ENCODE measurements at regions of chr14 and their contacts with region 1.

Region 1: GRCh38 chr14:61694830-61695694 is at the start of gene HIF1A:
- DNase-seq: peak; percentile 87
- H3K4me3 ChIP-seq: peak within 1 kb of the TSS; percentile 76 to 97 (median 92)
- H3K27ac ChIP-seq: peak within 1 kb of the TSS; percentile 96 to 100 (median 100)
- H3K4me1 ChIP-seq: peaks cover 9 to 39% (median 16%) of the 10 kb centered on the region in 3 donors
- H3K27me3 ChIP-seq: no peaks in the 10 kb centered on the region
- CTCF ChIP-seq: peak in 3 of 6 experiments; percentile 4 to 22 (median 22)
- POLR2A ChIP-seq: peak in 3 of 4 donors; percentile 96 to 98 (median 98)
- total RNA-seq, gene HIF1A: 108 to 199 (median 127) TPM

Region 2: DNA sequence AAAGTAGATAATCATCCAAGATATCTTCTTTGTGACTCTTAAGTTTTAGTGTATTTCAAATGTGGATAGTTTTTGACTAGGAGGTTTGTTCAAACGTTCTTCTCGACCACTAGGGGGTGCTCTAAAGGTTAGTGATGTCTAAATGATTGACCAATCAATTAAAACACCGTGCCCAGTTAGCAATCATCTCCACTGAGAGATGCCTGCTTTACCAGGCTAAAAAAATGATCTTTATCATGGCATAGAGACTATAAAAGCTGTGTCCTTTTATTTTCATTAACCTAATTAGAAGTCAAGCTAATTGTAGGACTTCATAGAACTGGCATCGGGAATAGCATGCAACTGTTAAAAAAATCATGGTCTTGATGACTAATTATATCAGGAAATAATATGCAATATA is 219.7 kb before region 1 on chr14:
- intact Hi-C with region 1: loop called (anchors 10 kb)
- DNase-seq: no peak
- H3K4me3 ChIP-seq: no peak overlapping the region
- H3K27ac ChIP-seq: peak overlapping the region; percentile 73 to 87 (median 80)
- H3K4me1 ChIP-seq: peaks cover 49 to 100% (median 78%) of the 10 kb centered on the region in 3 donors
- H3K27me3 ChIP-seq: no peaks in the 10 kb centered on the region
- CTCF ChIP-seq: peak; percentile 61 to 79 (median 68)
- POLR2A ChIP-seq: no peak

Region 3: GRCh38 chr14:62824086-62824485 is 1129.0 kb after region 1 on chr14:
- intact Hi-C with region 1: no loop called
- DNase-seq: no peak
- H3K4me3 ChIP-seq: no peak overlapping the region
- H3K27ac ChIP-seq: no peak overlapping the region
- H3K4me1 ChIP-seq: no peaks in the 10 kb centered on the region
- H3K27me3 ChIP-seq: no peaks in the 10 kb centered on the region
- CTCF ChIP-seq: no peak
- POLR2A ChIP-seq: no peak